ENCODE measurements at regions of chr12 and their contacts with region 1.

Region 1: DNA sequence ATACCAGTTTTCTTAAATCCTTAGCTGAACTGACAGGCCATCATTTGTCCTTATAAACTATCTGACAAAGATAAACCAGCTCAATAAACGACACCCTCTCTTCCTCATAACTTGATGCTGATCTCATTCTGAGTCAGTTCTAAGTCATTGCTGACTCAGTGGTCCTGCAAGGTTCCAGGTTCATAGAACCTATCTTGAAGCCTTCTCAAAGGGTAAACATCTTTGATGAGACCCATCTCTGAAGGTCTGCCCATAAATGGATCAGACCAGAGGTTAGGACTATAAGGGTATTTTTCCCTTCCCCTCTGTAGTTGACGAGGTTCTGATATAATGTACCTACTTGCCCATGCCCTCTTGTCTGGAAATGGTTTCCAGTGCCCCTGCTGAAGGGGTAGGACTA is 11.9 kb downstream of the NAA25 start:
- H3K4me3 Mint-ChIP-seq: peak overlapping the region; percentile 37
- H3K27ac Mint-ChIP-seq: peak overlapping the region; percentile 96
- H3K4me1 Mint-ChIP-seq: peaks cover 42% of the 10 kb centered on the region
- H3K27me3 Mint-ChIP-seq: no peaks in the 10 kb centered on the region

Region 2: GRCh38 chr12:111937429-111937828 is 159.2 kb before region 1 on chr12:
- intact Hi-C with region 1: no loop called
- H3K4me3 Mint-ChIP-seq: no peak overlapping the region
- H3K27ac Mint-ChIP-seq: no peak overlapping the region
- H3K4me1 Mint-ChIP-seq: peaks cover 1% of the 10 kb centered on the region
- H3K27me3 Mint-ChIP-seq: no peaks in the 10 kb centered on the region

Region 3: GRCh38 chr12:112130441-112130998 is 33.9 kb after region 1 on chr12:
- intact Hi-C with region 1: loop called (anchors 5 kb)
- H3K4me3 Mint-ChIP-seq: peak overlapping the region; percentile 44
- H3K27ac Mint-ChIP-seq: peak overlapping the region; percentile 84
- H3K4me1 Mint-ChIP-seq: peaks cover 46% of the 10 kb centered on the region
- H3K27me3 Mint-ChIP-seq: no peaks in the 10 kb centered on the region

Region 4: GRCh38 chr12:112183141-112184021 is 86.7 kb after region 1 on chr12:
- intact Hi-C with region 1: no loop called
- H3K4me3 Mint-ChIP-seq: no peak overlapping the region
- H3K27ac Mint-ChIP-seq: no peak overlapping the region
- H3K4me1 Mint-ChIP-seq: no peaks in the 10 kb centered on the region
- H3K27me3 Mint-ChIP-seq: no peaks in the 10 kb centered on the region